Activated CD8-positive, alpha-beta T cell treated with anti-CD3 and anti-CD28 coated beads, Interleukin-2, amount 10 ng/mL, durations not matched to agents 7 days and 5 days (primary cell): ENCODE measurements at regions of chr16 and their contacts with region 1.

Region 1: DNA sequence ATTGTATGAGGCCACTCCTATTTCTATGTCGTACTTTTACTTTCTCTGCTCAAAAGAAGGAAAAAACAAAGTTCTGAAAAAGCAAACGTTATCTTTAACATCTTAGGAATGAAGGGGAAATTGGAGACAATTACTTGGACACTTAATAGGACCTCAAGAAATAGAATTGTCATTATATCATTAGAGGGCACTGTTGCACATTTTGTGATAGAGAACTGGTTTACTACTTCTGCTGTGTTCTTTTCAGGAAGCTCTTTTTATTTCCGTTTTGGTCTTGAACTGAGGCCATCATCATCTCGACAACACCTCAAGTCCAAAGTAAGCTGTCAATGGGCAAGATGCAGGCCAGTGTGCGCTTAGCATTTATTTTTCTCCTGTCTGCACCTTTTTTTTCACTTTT is 14.6 kb downstream of the COG4 start:
- DNase-seq: no peak
- ATAC-seq: peak; percentile 72
- H3K4me3 Mint-ChIP-seq: no peak overlapping the region
- H3K27ac Mint-ChIP-seq: peak overlapping the region; percentile 83
- H3K4me1 Mint-ChIP-seq: peaks cover 11% of the 10 kb centered on the region
- H3K27me3 Mint-ChIP-seq: no peaks in the 10 kb centered on the region

Region 2: GRCh38 chr16:70395345-70395901 is 113.3 kb before region 1 on chr16:
- CTCF ChIA-PET with region 1: interaction called, 11 read pairs
- POLR2A ChIA-PET with region 1: no interaction called
- DNase-seq: peak; percentile 73
- ATAC-seq: peak; percentile 77
- H3K4me3 Mint-ChIP-seq: no peak overlapping the region
- H3K27ac Mint-ChIP-seq: no peak overlapping the region
- H3K4me1 Mint-ChIP-seq: peaks cover 14% of the 10 kb centered on the region
- H3K27me3 Mint-ChIP-seq: no peaks in the 10 kb centered on the region

Region 3: GRCh38 chr16:70495425-70496182 is 13.1 kb before region 1 on chr16:
- CTCF ChIA-PET with region 1: interaction called, 15 read pairs
- POLR2A ChIA-PET with region 1: no interaction called
- DNase-seq: no peak
- ATAC-seq: no peak
- H3K4me3 Mint-ChIP-seq: no peak overlapping the region
- H3K27ac Mint-ChIP-seq: no peak overlapping the region
- H3K4me1 Mint-ChIP-seq: peaks cover 22% of the 10 kb centered on the region
- H3K27me3 Mint-ChIP-seq: no peaks in the 10 kb centered on the region

Region 4: GRCh38 chr16:70523076-70523742 is 14.5 kb after region 1 on chr16 and contains the start of gene COG4:
- CTCF ChIA-PET with region 1: interaction called, 50 read pairs
- POLR2A ChIA-PET with region 1: interaction called, 17 read pairs
- DNase-seq: peak; percentile 95
- ATAC-seq: peak; percentile 76
- H3K4me3 Mint-ChIP-seq: peak within 1 kb of the TSS; percentile 98
- H3K27ac Mint-ChIP-seq: peak within 1 kb of the TSS; percentile 99
- H3K4me1 Mint-ChIP-seq: peaks cover 49% of the 10 kb centered on the region
- H3K27me3 Mint-ChIP-seq: no peaks in the 10 kb centered on the region
- total RNA-seq, gene COG4: 62.1 to 71.3 TPM

Region 5: GRCh38 chr16:70529051-70529777 is 20.5 kb after region 1 on chr16:
- CTCF ChIA-PET with region 1: interaction called, 39 read pairs
- POLR2A ChIA-PET with region 1: interaction called, 3 read pairs
- DNase-seq: peak; percentile 34
- ATAC-seq: no peak
- H3K4me3 Mint-ChIP-seq: peak overlapping the region; percentile 2
- H3K27ac Mint-ChIP-seq: no peak overlapping the region
- H3K4me1 Mint-ChIP-seq: peaks cover 49% of the 10 kb centered on the region
- H3K27me3 Mint-ChIP-seq: no peaks in the 10 kb centered on the region

Region 6: GRCh38 chr16:70534971-70535370 is 26.2 kb after region 1 on chr16:
- CTCF ChIA-PET with region 1: interaction called, 12 read pairs
- POLR2A ChIA-PET with region 1: interaction called, 3 read pairs
- DNase-seq: no peak
- ATAC-seq: no peak
- H3K4me3 Mint-ChIP-seq: no peak overlapping the region
- H3K27ac Mint-ChIP-seq: peak overlapping the region; percentile 6
- H3K4me1 Mint-ChIP-seq: peaks cover 22% of the 10 kb centered on the region
- H3K27me3 Mint-ChIP-seq: no peaks in the 10 kb centered on the region

Region 7: DNA sequence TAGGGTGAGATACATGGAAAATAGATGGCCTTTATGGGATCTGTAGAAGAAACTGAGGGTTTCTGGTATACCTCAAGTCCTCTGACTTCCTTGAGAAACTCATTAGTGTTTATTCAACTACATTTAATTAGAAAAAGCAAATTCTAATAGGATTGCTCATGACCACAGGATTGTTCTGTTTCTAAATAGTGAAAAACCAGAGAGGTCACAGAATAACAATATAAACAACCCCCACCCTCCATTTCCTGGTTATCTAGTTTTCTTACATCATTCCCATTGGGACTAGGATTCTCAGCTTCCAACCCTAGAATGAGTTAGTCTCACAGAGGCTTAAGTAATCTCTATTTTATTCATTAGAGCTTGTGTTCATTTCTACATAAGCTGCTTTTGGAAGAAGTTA is 44.9 kb after region 1 on chr16:
- CTCF ChIA-PET with region 1: interaction called, 14 read pairs
- POLR2A ChIA-PET with region 1: no interaction called
- DNase-seq: no peak
- ATAC-seq: no peak
- H3K4me3 Mint-ChIP-seq: no peak overlapping the region
- H3K27ac Mint-ChIP-seq: no peak overlapping the region
- H3K4me1 Mint-ChIP-seq: peaks cover 11% of the 10 kb centered on the region
- H3K27me3 Mint-ChIP-seq: no peaks in the 10 kb centered on the region